ENCODE measurements at regions of chr1 and their contacts with region 1.

Region 1: GRCh38 chr1:6489799-6490180 is 1.7 kb downstream of the PLEKHG5 start:
- DNase-seq: peak; percentile 88
- ATAC-seq: peak; percentile 71
- H3K4me3 Mint-ChIP-seq: peak overlapping the region; percentile 74
- H3K27ac Mint-ChIP-seq: peak overlapping the region; percentile 63
- H3K4me1 Mint-ChIP-seq: peaks cover 18% of the 10 kb centered on the region
- H3K27me3 Mint-ChIP-seq: peaks cover 9% of the 10 kb centered on the region

Region 2: DNA sequence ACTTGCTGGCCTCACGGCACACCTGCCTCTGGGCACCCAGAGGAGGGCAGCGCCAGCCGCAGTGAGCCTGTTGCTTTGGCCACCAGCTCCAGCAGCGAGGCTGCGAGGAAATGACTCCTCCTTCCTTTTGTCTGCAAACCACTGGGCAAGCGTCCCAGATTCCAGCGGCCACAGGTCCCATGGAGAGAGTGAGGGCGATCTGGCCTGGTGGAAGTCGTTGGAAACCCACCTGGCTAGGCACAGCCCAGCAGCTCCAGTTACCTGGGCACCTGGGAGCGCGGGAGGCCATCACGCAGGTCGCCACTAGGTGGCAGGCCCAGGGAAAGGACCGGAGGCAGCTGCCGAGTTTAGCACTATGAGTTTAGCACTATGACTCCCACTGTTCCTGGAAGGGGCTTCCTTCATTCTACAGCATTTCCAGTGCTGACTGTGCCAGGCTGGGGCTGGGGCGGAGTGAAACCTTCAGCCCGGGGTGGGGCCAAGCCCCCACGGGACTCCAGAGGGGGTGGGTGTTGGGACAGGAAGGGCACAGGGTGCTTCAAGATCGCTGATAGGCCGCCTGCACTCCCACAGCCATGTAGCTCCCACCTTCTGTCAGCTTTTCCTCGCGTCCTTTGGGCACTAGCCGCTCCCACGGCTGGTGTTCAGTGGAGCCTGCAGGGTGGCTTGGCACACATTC is 66.3 kb before region 1 on chr1:
- CTCF ChIA-PET with region 1: interaction called, 3 read pairs
- POLR2A ChIA-PET with region 1: no interaction called
- intact Hi-C with region 1: loop called in 1 of 2 experiments (anchors 1 kb)
- DNase-seq: peak; percentile 87
- ATAC-seq: peak; percentile 83
- H3K4me3 Mint-ChIP-seq: peak overlapping the region; percentile 7
- H3K27ac Mint-ChIP-seq: no peak overlapping the region
- H3K4me1 Mint-ChIP-seq: peaks cover 12% of the 10 kb centered on the region
- H3K27me3 Mint-ChIP-seq: peaks cover 36% of the 10 kb centered on the region

Region 3: DNA sequence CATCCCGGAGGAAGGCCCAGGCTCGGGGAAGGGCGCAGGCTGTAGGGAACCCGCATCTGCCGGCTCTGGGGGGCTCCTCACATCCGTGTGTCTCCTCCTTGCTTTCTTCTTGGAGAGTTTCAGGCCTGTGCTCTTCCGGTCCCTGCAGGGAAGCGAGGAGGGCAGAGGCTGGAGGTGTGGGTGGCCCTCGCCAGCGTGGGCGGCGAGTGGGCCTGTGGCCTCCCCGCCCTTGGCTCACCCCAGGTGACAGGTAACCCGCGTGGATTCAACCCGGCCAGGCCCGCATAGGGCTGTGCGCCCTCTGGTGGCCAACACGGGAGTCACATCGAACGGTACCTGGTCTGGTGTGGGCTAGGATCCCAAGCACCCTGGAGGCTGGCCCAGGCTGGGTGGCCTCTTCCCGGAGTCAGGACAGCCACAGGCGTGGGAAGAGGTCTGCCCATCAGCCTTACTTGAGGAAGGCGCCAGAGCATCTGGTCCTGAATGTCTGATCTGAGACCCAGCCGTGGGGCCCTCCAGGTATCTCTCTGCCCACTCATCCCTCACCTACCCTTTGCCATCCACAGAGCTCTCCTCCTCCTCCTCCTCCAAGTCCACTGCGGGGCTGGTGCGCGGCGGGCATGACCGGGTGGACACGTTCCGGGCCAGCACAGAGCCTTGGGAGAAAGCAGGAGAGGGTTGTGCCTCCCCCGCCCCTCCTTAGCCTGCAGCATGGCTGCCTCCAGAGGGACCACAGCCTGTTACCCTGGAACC is 14.2 kb before region 1 on chr1:
- CTCF ChIA-PET with region 1: interaction called, 10 read pairs
- POLR2A ChIA-PET with region 1: no interaction called
- intact Hi-C with region 1: loop called in 1 of 2 experiments (anchors 1 kb)
- DNase-seq: peak; percentile 84
- ATAC-seq: peak; percentile 94
- H3K4me3 Mint-ChIP-seq: no peak overlapping the region
- H3K27ac Mint-ChIP-seq: no peak overlapping the region
- H3K4me1 Mint-ChIP-seq: peaks cover 2% of the 10 kb centered on the region
- H3K27me3 Mint-ChIP-seq: no peaks in the 10 kb centered on the region

Region 4: DNA sequence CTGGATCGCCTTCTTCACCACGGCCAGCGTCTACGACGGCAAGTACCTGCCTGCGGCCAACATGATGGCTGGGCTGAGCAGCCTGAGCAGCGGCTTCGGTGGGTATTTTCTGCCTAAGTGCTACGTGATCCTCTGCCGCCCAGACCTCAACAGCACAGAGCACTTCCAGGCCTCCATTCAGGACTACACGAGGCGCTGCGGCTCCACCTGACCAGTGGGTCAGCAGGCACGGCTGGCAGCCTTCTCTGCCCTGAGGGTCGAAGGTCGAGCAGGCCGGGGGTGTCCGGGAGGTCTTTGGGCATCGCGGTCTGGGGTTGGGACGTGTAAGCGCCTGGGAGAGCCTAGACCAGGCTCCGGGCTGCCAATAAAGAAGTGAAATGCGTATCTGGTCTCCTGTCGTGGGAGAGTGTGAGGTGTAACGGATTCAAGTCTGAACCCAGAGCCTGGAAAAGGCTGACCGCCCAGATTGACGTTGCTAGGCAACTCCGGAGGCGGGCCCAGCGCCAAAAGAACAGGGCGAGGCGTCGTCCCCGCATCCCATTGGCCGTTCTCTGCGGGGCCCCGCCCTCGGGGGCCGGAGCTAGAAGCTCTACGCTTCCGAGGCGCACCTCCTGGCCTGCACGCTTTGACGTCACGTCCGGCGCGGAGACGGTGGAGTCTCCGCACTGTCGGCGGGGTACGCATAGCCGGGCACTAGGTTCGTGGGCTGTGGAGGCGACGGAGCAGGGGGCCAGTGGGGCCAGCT is 89.8 kb after region 1 on chr1 and contains the start of gene ZBTB48:
- CTCF ChIA-PET with region 1: no interaction called
- POLR2A ChIA-PET with region 1: no interaction called
- intact Hi-C with region 1: no loop called
- DNase-seq: peak; percentile 99
- ATAC-seq: peak; percentile 99
- H3K4me3 Mint-ChIP-seq: peak within 1 kb of the TSS; percentile 92
- H3K27ac Mint-ChIP-seq: peak within 1 kb of the TSS; percentile 89
- H3K4me1 Mint-ChIP-seq: peaks cover 30% of the 10 kb centered on the region
- H3K27me3 Mint-ChIP-seq: no peaks in the 10 kb centered on the region
- total RNA-seq, gene ZBTB48: 23.2 to 26.0 TPM

Region 5: GRCh38 chr1:6624710-6625583 is 135.2 kb after region 1 on chr1 and contains the start of gene THAP3:
- CTCF ChIA-PET with region 1: interaction called, 4 read pairs
- POLR2A ChIA-PET with region 1: no interaction called
- intact Hi-C with region 1: loop called in 1 of 2 experiments (anchors 1 kb)
- DNase-seq: peak; percentile 96
- ATAC-seq: peak; percentile 98
- H3K4me3 Mint-ChIP-seq: peak within 1 kb of the TSS; percentile 85
- H3K27ac Mint-ChIP-seq: peak within 1 kb of the TSS; percentile 78
- H3K4me1 Mint-ChIP-seq: peaks cover 28% of the 10 kb centered on the region
- H3K27me3 Mint-ChIP-seq: no peaks in the 10 kb centered on the region
- total RNA-seq, gene THAP3: 19.4 to 22.1 TPM

Region 6: DNA sequence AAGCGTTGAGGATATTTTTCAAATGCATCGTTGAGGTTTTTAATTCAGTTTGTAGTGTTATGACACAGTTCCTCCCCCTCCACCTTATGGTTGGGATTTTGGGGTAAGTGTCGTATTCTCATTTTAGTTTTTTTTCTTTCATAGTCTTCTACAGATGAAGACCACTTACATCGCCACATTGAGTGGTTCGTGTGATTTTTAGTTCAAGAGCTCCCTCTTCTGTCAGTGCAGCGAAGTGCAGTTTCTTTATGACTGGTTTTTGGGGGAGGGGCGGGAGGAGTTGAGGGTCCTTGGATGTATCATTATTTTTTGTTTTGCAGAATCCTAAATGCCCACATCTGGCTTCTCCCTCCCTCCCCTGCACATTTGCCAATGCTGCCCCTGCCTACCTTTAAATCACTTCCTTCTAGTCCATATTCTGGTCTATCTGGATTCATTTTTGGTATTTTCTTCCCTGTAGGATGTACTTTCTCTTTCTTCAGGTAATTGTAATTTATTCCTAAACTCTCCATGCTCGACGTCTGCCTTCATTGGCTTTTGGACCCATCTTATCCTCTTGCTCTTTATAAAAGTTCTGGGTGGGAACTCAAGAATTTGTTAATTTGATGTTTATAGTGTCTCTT is 728.5 kb after region 1 on chr1:
- CTCF ChIA-PET with region 1: no interaction called
- POLR2A ChIA-PET with region 1: no interaction called
- intact Hi-C with region 1: loop called (anchors 2 to 5 kb)
- DNase-seq: peak; percentile 52
- ATAC-seq: no peak
- H3K4me3 Mint-ChIP-seq: no peak overlapping the region
- H3K27ac Mint-ChIP-seq: no peak overlapping the region
- H3K4me1 Mint-ChIP-seq: no peaks in the 10 kb centered on the region
- H3K27me3 Mint-ChIP-seq: peaks cover 21% of the 10 kb centered on the region

Measured in activated CD4-positive, alpha-beta T cell treated with anti-CD3 and anti-CD28 coated beads for 36 hours (primary cell).